H1 (cell line): ENCODE measurements at regions of chr16 and their contacts with region 1.

Region 1: DNA sequence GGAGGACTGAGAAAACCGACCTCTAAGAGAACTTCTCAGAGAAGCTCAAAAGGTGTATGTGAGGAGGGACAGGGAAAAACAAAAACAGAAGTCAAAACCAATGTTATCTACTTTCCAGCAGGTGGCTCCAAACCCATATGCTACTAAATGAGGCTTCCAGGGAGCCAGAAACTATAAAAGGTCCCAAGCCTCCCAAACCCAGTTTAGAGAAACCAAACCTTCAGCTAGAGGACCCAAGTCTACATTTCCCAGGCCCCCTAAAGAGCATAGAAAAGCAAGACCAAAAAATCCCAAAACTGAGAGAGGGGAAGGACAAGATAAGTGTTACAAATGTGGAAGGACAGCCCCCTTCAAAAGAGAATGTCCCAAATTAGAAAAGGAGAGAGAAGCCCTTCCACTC is 3.7 kb downstream of the HPR start:
- DNase-seq: no peak
- H3K4me3 ChIP-seq: no peak overlapping the region
- H3K27ac ChIP-seq: no peak overlapping the region
- H3K4me1 ChIP-seq: no peaks in the 10 kb centered on the region
- H3K27me3 ChIP-seq: no peaks in the 10 kb centered on the region
- CTCF ChIP-seq: peak in 2 of 3 experiments; percentile 61 to 73; a peak in 3 of 4 replicates
- EP300 ChIP-seq: no peak
- POLR2A ChIP-seq: no peak
- RAD21 ChIP-seq: peak; percentile 76 to 84

Region 2: DNA sequence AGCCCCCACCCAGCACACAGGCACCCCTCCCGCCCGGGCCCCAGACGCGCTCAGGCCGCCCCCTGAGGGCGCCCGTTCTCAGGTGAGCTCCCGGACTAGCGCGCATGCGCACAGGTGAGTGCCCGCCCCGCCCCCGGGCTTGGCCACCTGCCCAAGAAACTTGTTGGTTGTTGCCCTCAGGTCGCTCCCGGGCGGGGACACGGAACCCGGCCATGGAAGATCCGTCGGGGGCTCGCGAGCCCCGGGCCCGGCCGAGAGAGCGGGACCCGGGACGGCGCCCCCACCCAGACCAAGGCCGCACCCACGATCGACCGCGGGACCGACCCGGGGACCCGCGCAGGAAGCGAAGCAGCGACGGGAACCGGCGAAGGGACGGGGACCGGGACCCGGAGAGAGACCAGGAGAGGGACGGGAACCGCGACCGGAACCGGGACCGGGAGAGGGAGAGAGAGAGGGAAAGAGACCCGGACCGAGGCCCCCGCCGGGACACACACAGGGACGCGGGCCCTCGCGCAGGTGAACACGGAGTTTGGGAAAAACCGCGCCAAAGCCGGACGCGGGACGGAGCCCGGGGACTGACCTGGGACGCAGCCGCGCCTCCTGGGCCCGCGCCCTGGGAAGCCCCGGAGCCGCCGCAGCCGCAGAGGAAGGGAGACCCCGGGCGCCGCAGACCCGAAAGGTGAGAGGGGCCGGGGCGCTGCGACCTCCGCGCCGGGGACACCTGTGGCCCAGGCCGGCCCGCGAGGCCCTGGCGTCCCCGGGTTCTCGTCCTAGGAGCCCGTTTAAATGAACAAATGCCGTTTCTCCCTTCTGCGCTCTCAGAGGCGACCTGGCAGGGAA is 440.5 kb before region 1 on chr16 and contains the start of gene MARVELD3:
- CTCF ChIA-PET with region 1: no interaction called
- POLR2A ChIA-PET with region 1: no interaction called
- DNase-seq: peak; percentile 70 to 99
- H3K4me3 ChIP-seq: peak within 1 kb of the TSS; percentile 86 to 99 (median 92)
- H3K27ac ChIP-seq: peak within 1 kb of the TSS; percentile 86; the same call in 1 of the 2 replicates
- H3K4me1 ChIP-seq: peaks cover 0 to 12% (median 6%) of the 10 kb centered on the region in 4 experiments; a peak in 6 of 7 replicates
- H3K27me3 ChIP-seq: no peaks in the 10 kb centered on the region
- CTCF ChIP-seq: peak in 2 of 3 experiments; percentile 14 to 27; a peak in 2 of 4 replicates
- EP300 ChIP-seq: no peak
- POLR2A ChIP-seq: peak; percentile 69 to 82
- RAD21 ChIP-seq: no peak; a peak in 2 of 4 replicates
- total RNA-seq, gene MARVELD3: 34.8 TPM in 2 replicates

Region 3: GRCh38 chr16:71927383-71927782 is 139.4 kb before region 1 on chr16:
- CTCF ChIA-PET with region 1: no interaction called
- POLR2A ChIA-PET with region 1: no interaction called
- DNase-seq: no peak
- H3K4me3 ChIP-seq: no peak overlapping the region
- H3K27ac ChIP-seq: no peak overlapping the region
- H3K4me1 ChIP-seq: no peaks in the 10 kb centered on the region
- H3K27me3 ChIP-seq: no peaks in the 10 kb centered on the region
- CTCF ChIP-seq: no peak
- EP300 ChIP-seq: no peak
- POLR2A ChIP-seq: no peak
- RAD21 ChIP-seq: no peak

Region 4: GRCh38 chr16:72050769-72051464 is 15.8 kb before region 1 on chr16:
- CTCF ChIA-PET with region 1: interaction called, 10 read pairs
- POLR2A ChIA-PET with region 1: interaction called, 4 read pairs
- DNase-seq: no peak
- H3K4me3 ChIP-seq: no peak overlapping the region
- H3K27ac ChIP-seq: no peak overlapping the region
- H3K4me1 ChIP-seq: no peaks in the 10 kb centered on the region
- H3K27me3 ChIP-seq: no peaks in the 10 kb centered on the region
- CTCF ChIP-seq: no peak
- EP300 ChIP-seq: no peak
- POLR2A ChIP-seq: no peak
- RAD21 ChIP-seq: no peak

Region 5: DNA sequence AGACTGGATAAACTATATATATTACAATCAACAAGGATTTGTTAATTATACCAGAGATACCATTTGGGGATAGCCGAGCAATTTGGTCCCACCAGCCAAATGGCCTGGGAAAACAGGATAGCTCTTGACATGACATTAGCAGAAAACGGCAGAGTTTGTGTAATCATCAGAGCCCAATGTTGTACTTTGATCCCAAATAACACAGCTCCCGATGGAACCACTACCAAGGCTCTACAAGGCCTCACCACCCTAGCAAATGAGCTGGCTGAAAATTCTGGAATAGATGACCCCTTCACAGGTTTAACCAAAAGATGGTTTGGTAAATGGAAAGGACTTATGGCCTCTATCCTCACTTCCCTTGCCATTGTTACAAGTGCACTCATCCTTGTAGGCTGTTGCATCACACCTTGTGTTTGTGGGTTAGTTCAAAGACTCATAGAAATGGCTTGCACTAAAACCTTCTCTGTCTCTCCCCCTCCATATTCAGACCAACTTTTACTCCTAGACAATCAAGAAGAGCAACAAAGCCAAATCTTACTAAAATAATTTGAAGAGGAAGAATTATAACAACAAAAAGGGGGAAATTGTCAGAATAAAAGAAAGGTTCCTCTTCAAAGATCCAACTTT is 17.1 kb after region 1 on chr16:
- CTCF ChIA-PET with region 1: interaction called, 19 read pairs
- POLR2A ChIA-PET with region 1: no interaction called
- DNase-seq: no peak
- H3K4me3 ChIP-seq: no peak overlapping the region
- H3K27ac ChIP-seq: no peak overlapping the region
- H3K4me1 ChIP-seq: no peaks in the 10 kb centered on the region
- H3K27me3 ChIP-seq: no peaks in the 10 kb centered on the region
- CTCF ChIP-seq: no peak
- EP300 ChIP-seq: no peak
- POLR2A ChIP-seq: no peak
- RAD21 ChIP-seq: no peak

Region 6: GRCh38 chr16:72093448-72094265 is 26.9 kb after region 1 on chr16 and contains the starts of genes DHX38 and TXNL4B:
- CTCF ChIA-PET with region 1: interaction called, 108 read pairs
- POLR2A ChIA-PET with region 1: interaction called, 23 read pairs
- DNase-seq: peak; percentile 85 to 94
- H3K4me3 ChIP-seq: peak within 1 kb of the TSS; percentile 93 to 100 (median 98)
- H3K27ac ChIP-seq: peak within 1 kb of the TSS; percentile 93
- H3K4me1 ChIP-seq: peaks cover 0 to 6% (median under 1%) of the 10 kb centered on the region in 4 experiments; a peak in 2 of 7 replicates
- H3K27me3 ChIP-seq: no peaks in the 10 kb centered on the region
- CTCF ChIP-seq: no peak
- EP300 ChIP-seq: no peak
- POLR2A ChIP-seq: peak; percentile 89 to 92
- RAD21 ChIP-seq: no peak
- total RNA-seq, gene DHX38: 53.5 and 58.3 TPM in 2 replicates
- total RNA-seq, gene TXNL4B: 8.6 and 10.6 TPM in 2 replicates

Region 7: GRCh38 chr16:72182976-72183375 is 116.2 kb after region 1 on chr16:
- CTCF ChIA-PET with region 1: no interaction called
- POLR2A ChIA-PET with region 1: no interaction called
- DNase-seq: no peak
- H3K4me3 ChIP-seq: no peak overlapping the region
- H3K27ac ChIP-seq: no peak overlapping the region
- H3K4me1 ChIP-seq: 0 out of 7 replicates have a peak, but pooled peaks cover 0 to 4% (median 0%) of the 10 kb centered on the region in 4 experiments
- H3K27me3 ChIP-seq: no peaks in the 10 kb centered on the region
- CTCF ChIP-seq: no peak
- EP300 ChIP-seq: no peak
- POLR2A ChIP-seq: no peak
- RAD21 ChIP-seq: no peak

Region 8: GRCh38 chr16:72332926-72333325 is 266.2 kb after region 1 on chr16:
- CTCF ChIA-PET with region 1: no interaction called
- POLR2A ChIA-PET with region 1: no interaction called
- DNase-seq: no peak
- H3K4me3 ChIP-seq: no peak overlapping the region
- H3K27ac ChIP-seq: no peak overlapping the region
- H3K4me1 ChIP-seq: no peaks in the 10 kb centered on the region
- H3K27me3 ChIP-seq: no peaks in the 10 kb centered on the region
- CTCF ChIP-seq: no peak
- EP300 ChIP-seq: no peak
- POLR2A ChIP-seq: no peak
- RAD21 ChIP-seq: no peak